CD4-positive, alpha-beta T cell (primary cell): ENCODE measurements at regions of chr3 and their contacts with region 1.

Region 1: GRCh38 chr3:133578548-133579191 is 5.2 kb downstream of the CDV3 start:
- DNase-seq: peak in 3 of 14 experiments; percentile 17 to 38 (median 26)
- ATAC-seq: no peak
- H3K4me3 ChIP-seq: no peak overlapping the region
- H3K4me3 Mint-ChIP-seq: peak overlapping the region; percentile 82
- H3K27ac ChIP-seq: peak overlapping the region in 1 of 2 donors; percentile 19
- H3K27ac Mint-ChIP-seq: peak overlapping the region; percentile 99
- H3K4me1 ChIP-seq: peaks cover 54% of the 10 kb centered on the region
- H3K4me1 Mint-ChIP-seq: peaks cover 74% of the 10 kb centered on the region
- H3K27me3 ChIP-seq: no peaks in the 10 kb centered on the region
- H3K27me3 Mint-ChIP-seq: no peaks in the 10 kb centered on the region
- CTCF ChIP-seq: peak; percentile 71

Region 2: GRCh38 chr3:133448478-133449122 is 130.1 kb before region 1 on chr3:
- CTCF ChIA-PET with region 1: no interaction called
- POLR2A ChIA-PET with region 1: interaction called, 13 read pairs
- intact Hi-C with region 1: loop called in 1 of 2 experiments (anchors 5 kb)
- DNase-seq: peak in 5 of 14 experiments; percentile 2 to 60 (median 48)
- ATAC-seq: peak; percentile 76
- H3K4me3 ChIP-seq: no peak overlapping the region
- H3K4me3 Mint-ChIP-seq: peak overlapping the region; percentile 13
- H3K27ac ChIP-seq: peak overlapping the region in 1 of 2 donors; percentile 62
- H3K27ac Mint-ChIP-seq: peak overlapping the region; percentile 75
- H3K4me1 ChIP-seq: peaks cover 23% of the 10 kb centered on the region
- H3K4me1 Mint-ChIP-seq: peaks cover 25% of the 10 kb centered on the region
- H3K27me3 ChIP-seq: no peaks in the 10 kb centered on the region
- H3K27me3 Mint-ChIP-seq: no peaks in the 10 kb centered on the region
- CTCF ChIP-seq: no peak